ENCODE measurements at regions of chr12 and their contacts with region 1.

Region 1: DNA sequence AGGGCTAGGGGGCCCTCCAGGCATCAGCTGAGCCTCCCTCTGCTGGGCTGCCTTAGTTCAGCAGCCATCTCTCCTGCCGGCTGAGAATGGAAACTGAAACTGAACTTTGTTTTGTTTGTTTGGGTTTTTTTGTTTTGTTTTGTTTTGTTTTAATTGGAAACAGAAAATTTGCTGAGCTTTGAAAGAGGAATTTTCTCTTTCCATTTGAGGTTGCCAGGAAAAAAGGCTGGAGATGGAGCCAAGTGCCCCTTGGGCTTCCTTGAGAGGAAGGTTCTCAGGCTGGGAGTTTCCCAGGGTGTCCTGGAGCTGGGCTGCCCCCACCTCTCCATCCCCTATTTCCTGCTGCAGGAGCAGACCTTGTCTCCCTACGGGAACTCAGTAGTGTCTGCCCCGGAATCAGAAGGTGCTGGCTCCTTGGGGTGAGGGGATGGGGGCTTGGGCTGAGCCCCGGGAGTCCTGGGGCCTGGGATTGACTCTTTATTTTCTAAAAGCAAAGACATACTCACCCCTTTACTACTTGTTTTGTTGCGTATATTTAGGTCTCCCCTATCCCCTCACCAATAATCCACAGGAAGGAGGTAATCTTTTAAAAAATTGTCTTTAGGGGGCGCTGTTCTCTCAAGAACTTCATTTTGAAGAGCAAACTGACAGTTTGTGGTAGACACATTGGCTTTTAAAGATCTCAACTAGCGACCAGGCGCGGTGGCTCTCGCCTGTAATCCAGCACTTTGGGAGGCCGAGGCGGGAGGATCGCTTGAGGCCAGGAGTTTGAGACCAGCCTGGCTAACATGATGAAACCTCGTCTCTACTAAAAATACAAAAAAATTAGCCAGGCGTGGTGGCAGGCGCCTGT is 21.3 kb upstream of the OASL start:
- DNase-seq: peak; percentile 29 to 65 (median 37)
- ATAC-seq: peak; percentile 87
- H3K4me3 ChIP-seq: 0 out of 2 replicates have a peak overlapping the region, but pooled peaks have one; percentile 14
- H3K27ac ChIP-seq: no peak overlapping the region
- H3K4me1 ChIP-seq: no peaks in the 10 kb centered on the region; a peak in 1 of 5 replicates
- H3K27me3 ChIP-seq: peaks cover 13 to 25% of the 10 kb centered on the region in 2 experiments; a peak in 4 of 5 replicates
- CTCF ChIP-seq: peak; percentile 53 to 74 (median 69); a peak in 5 of 6 replicates
- EP300 ChIP-seq: no peak
- POLR2A ChIP-seq: no peak
- RAD21 ChIP-seq: peak; percentile 46 to 71

Region 2: GRCh38 chr12:121095544-121096198 is 35.3 kb after region 1 on chr12:
- CTCF ChIA-PET with region 1: interaction called, 8 read pairs
- POLR2A ChIA-PET with region 1: no interaction called
- in situ Hi-C with region 1: no loop called
- intact Hi-C with region 1: loop called (anchors 2 kb)
- DNase-seq: peak; percentile 78 to 89 (median 88)
- ATAC-seq: peak; percentile 99
- H3K4me3 ChIP-seq: peak overlapping the region; percentile 21
- H3K27ac ChIP-seq: no peak overlapping the region
- H3K4me1 ChIP-seq: peaks cover 4 to 13% of the 10 kb centered on the region in 2 experiments; a peak in 3 of 5 replicates
- H3K27me3 ChIP-seq: peaks cover 0 to 6% of the 10 kb centered on the region in 2 experiments; a peak in 1 of 5 replicates
- CTCF ChIP-seq: peak; percentile 84 to 88 (median 85)
- EP300 ChIP-seq: no peak
- POLR2A ChIP-seq: no peak
- RAD21 ChIP-seq: peak; percentile 67 to 84

Region 3: DNA sequence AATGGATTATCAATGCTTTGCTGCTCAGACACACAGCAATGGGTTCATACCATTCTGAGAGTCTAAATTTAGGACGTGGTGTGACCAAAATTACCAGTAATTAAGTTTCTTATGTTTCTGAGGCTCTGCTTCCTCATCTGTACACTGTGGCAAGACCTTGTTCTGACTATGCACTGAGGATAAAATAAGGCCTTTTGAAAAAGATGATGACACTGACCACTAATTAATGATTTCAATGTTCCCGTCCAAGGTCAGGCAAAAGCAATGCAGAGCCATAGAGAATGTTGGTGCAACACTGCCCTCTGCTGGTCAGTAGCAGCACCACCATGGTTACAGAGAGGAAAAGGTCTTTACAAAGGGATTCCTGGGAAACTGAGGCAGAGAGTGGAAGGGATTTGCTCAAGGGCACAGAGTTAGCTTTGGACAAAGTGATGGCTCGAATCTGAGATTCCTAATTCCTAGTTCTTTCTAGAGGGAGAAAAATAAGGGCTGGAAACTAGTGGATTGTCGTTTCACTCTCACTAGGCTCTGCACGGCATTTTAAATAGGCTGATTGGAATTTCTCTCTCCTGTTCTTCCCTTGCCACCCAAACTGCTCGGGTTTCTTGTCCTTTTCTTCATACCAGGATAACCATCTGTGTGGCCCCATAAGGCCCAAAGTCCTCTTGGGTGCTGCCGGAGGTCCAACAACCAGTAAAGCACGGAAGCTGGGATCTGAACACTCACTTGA is 50.0 kb after region 1 on chr12:
- CTCF ChIA-PET with region 1: interaction called, 24 read pairs
- POLR2A ChIA-PET with region 1: no interaction called
- in situ Hi-C with region 1: no loop called
- intact Hi-C with region 1: loop called (anchors 1 kb)
- DNase-seq: peak; percentile 65 to 80 (median 75)
- ATAC-seq: peak; percentile 92
- H3K4me3 ChIP-seq: no peak overlapping the region
- H3K27ac ChIP-seq: no peak overlapping the region
- H3K4me1 ChIP-seq: no peaks in the 10 kb centered on the region
- H3K27me3 ChIP-seq: peaks cover 2 to 14% of the 10 kb centered on the region in 2 experiments; a peak in 2 of 5 replicates
- CTCF ChIP-seq: peak; percentile 86 to 93 (median 92)
- EP300 ChIP-seq: no peak
- POLR2A ChIP-seq: no peak
- RAD21 ChIP-seq: peak; percentile 90 to 94

Region 4: GRCh38 chr12:121209624-121210572 is 149.5 kb after region 1 on chr12 and contains the start of gene P2RX4:
- CTCF ChIA-PET with region 1: no interaction called
- POLR2A ChIA-PET with region 1: no interaction called
- in situ Hi-C with region 1: no loop called
- intact Hi-C with region 1: loop called (anchors 5 kb)
- DNase-seq: peak; percentile 92 to 97 (median 96)
- ATAC-seq: peak; percentile 99
- H3K4me3 ChIP-seq: peak within 1 kb of the TSS; percentile 91
- H3K27ac ChIP-seq: peak within 1 kb of the TSS; percentile 89
- H3K4me1 ChIP-seq: peaks cover 11 to 24% of the 10 kb centered on the region in 2 experiments; a peak in 4 of 5 replicates
- H3K27me3 ChIP-seq: no peaks in the 10 kb centered on the region
- CTCF ChIP-seq: peak; percentile 45 to 95 (median 78); a peak in 5 of 6 replicates
- EP300 ChIP-seq: no peak
- POLR2A ChIP-seq: peak; percentile 92
- RAD21 ChIP-seq: peak; percentile 75 to 77
- polyA plus RNA-seq, gene P2RX4: 6.6 to 10.0 TPM

Region 5: DNA sequence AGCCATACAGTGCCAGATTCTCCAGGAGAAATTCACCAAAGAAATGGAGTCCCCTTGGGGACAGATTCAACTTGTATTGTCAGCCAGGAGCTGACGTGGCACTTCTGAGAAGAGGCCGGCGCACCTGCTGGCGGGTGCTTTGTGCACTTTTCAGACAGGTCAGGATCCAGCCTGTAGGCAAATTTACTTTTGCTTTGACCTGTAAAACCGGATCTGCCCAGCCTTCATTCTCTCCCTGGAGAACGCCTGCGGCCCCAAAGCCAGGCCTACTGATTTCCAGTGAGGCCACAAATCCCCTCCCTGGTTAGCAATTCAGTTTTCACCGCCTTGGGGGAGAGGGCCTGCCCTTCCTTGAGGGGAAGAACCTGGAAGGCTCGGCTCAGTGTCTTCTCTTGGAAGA is 166.9 kb after region 1 on chr12:
- CTCF ChIA-PET with region 1: interaction called, 19 read pairs
- POLR2A ChIA-PET with region 1: no interaction called
- in situ Hi-C with region 1: loop called (anchors 5 kb)
- intact Hi-C with region 1: loop called (anchors 1 kb)
- DNase-seq: no peak
- ATAC-seq: no peak
- H3K4me3 ChIP-seq: no peak overlapping the region
- H3K27ac ChIP-seq: no peak overlapping the region
- H3K4me1 ChIP-seq: peaks cover 4 to 18% of the 10 kb centered on the region in 2 experiments; a peak in 4 of 5 replicates
- H3K27me3 ChIP-seq: no peaks in the 10 kb centered on the region
- CTCF ChIP-seq: no peak
- EP300 ChIP-seq: no peak
- POLR2A ChIP-seq: no peak
- RAD21 ChIP-seq: no peak

Region 6: GRCh38 chr12:122031342-122032216 is 971.2 kb after region 1 on chr12:
- CTCF ChIA-PET with region 1: no interaction called
- POLR2A ChIA-PET with region 1: no interaction called
- in situ Hi-C with region 1: no loop called
- intact Hi-C with region 1: no loop called
- DNase-seq: peak; percentile 64 to 74 (median 70)
- ATAC-seq: peak; percentile 95
- H3K4me3 ChIP-seq: no peak overlapping the region
- H3K27ac ChIP-seq: no peak overlapping the region
- H3K4me1 ChIP-seq: peaks cover 0 to 33% of the 10 kb centered on the region in 2 experiments; a peak in 4 of 5 replicates
- H3K27me3 ChIP-seq: no peaks in the 10 kb centered on the region
- CTCF ChIP-seq: peak; percentile 73 to 87 (median 82)
- EP300 ChIP-seq: no peak
- POLR2A ChIP-seq: no peak
- RAD21 ChIP-seq: peak in 1 of 2 experiments; percentile 52; a peak in 2 of 4 replicates